T-cell (primary cell): ENCODE measurements at regions of chr11 and their contacts with region 1.

Region 1: GRCh38 chr11:86052693-86053641 is 15.9 kb downstream of the PICALM start:
- DNase-seq: no peak
- ATAC-seq: peak in 2 of 4 experiments; percentile 37 to 45
- H3K4me3 ChIP-seq: no peak overlapping the region
- H3K4me3 Mint-ChIP-seq: peak overlapping the region in 1 of 3 donors; percentile 28
- H3K27ac ChIP-seq: no peak overlapping the region
- H3K27ac Mint-ChIP-seq: peak overlapping the region; percentile 34 to 57
- H3K4me1 ChIP-seq: peaks cover 18 to 49% of the 10 kb centered on the region in 2 experiments
- H3K4me1 Mint-ChIP-seq: peaks cover 86 to 92% (median 92%) of the 10 kb centered on the region in 3 donors
- H3K27me3 ChIP-seq: no peaks in the 10 kb centered on the region
- H3K27me3 Mint-ChIP-seq: no peaks in the 10 kb centered on the region

Region 2: GRCh38 chr11:86021377-86021776 is 31.6 kb before region 1 on chr11:
- CTCF ChIA-PET with region 1: no interaction called
- POLR2A ChIA-PET with region 1: no interaction called
- DNase-seq: no peak
- ATAC-seq: no peak
- H3K4me3 ChIP-seq: no peak overlapping the region
- H3K4me3 Mint-ChIP-seq: no peak overlapping the region
- H3K27ac ChIP-seq: no peak overlapping the region
- H3K27ac Mint-ChIP-seq: peak overlapping the region in 1 of 2 donors; percentile 23
- H3K4me1 ChIP-seq: no peaks in the 10 kb centered on the region
- H3K4me1 Mint-ChIP-seq: peaks cover 32 to 46% (median 41%) of the 10 kb centered on the region in 3 donors
- H3K27me3 ChIP-seq: no peaks in the 10 kb centered on the region
- H3K27me3 Mint-ChIP-seq: no peaks in the 10 kb centered on the region

Region 3: GRCh38 chr11:86068951-86069407 is 16.0 kb after region 1 on chr11 and contains the start of gene PICALM:
- CTCF ChIA-PET with region 1: interaction called, 3 to 13 read pairs
- POLR2A ChIA-PET with region 1: interaction called in 1 of 2 experiments, 3 read pairs
- DNase-seq: peak; percentile 90 to 99 (median 95)
- ATAC-seq: peak; percentile 90 to 93 (median 91)
- H3K4me3 ChIP-seq: peak within 1 kb of the TSS; percentile 80 to 85
- H3K4me3 Mint-ChIP-seq: peak within 1 kb of the TSS; percentile 99
- H3K27ac ChIP-seq: peak within 1 kb of the TSS; percentile 90
- H3K27ac Mint-ChIP-seq: peak within 1 kb of the TSS; percentile 88 to 96
- H3K4me1 ChIP-seq: peaks cover 19 to 27% of the 10 kb centered on the region in 2 experiments
- H3K4me1 Mint-ChIP-seq: peaks cover 33 to 50% (median 36%) of the 10 kb centered on the region in 3 donors
- H3K27me3 ChIP-seq: no peaks in the 10 kb centered on the region
- H3K27me3 Mint-ChIP-seq: peaks cover 0 to 3% of the 10 kb centered on the region in 2 donors
- total RNA-seq, gene PICALM: 97.7 to 121 (median 105) TPM

Region 4: GRCh38 chr11:86244522-86245368 is 191.8 kb after region 1 on chr11 and contains the start of gene EED:
- CTCF ChIA-PET with region 1: no interaction called
- POLR2A ChIA-PET with region 1: interaction called in 1 of 2 experiments, 10 read pairs
- DNase-seq: peak; percentile 80 to 96 (median 93)
- ATAC-seq: peak; percentile 84 to 90 (median 87)
- H3K4me3 ChIP-seq: peak within 1 kb of the TSS; percentile 70 to 99
- H3K4me3 Mint-ChIP-seq: no peak within 1 kb of the TSS
- H3K27ac ChIP-seq: peak within 1 kb of the TSS; percentile 93
- H3K27ac Mint-ChIP-seq: no peak within 1 kb of the TSS
- H3K4me1 ChIP-seq: peaks cover 11 to 23% of the 10 kb centered on the region in 2 experiments
- H3K4me1 Mint-ChIP-seq: peaks cover 27 to 32% (median 29%) of the 10 kb centered on the region in 3 donors
- H3K27me3 ChIP-seq: no peaks in the 10 kb centered on the region
- H3K27me3 Mint-ChIP-seq: peaks cover 0 to 6% of the 10 kb centered on the region in 2 donors
- total RNA-seq, gene EED: 31.6 to 37.6 (median 35.7) TPM